ENCODE measurements at regions of chr3 and their contacts with region 1.

Region 1: GRCh38 chr3:27279123-27279522 is 90.1 kb downstream of the NEK10 start:
- DNase-seq: no peak
- ATAC-seq: peak in 1 of 8 donors; percentile 58
- H3K4me3 ChIP-seq: no peak overlapping the region
- H3K27ac ChIP-seq: no peak overlapping the region
- H3K4me1 ChIP-seq: peaks cover 0 to 10% (median 0%) of the 10 kb centered on the region in 9 donors
- H3K27me3 ChIP-seq: no peaks in the 10 kb centered on the region
- CTCF ChIP-seq: peak in 8 of 9 donors; percentile 6 to 64 (median 48)

Region 2: DNA sequence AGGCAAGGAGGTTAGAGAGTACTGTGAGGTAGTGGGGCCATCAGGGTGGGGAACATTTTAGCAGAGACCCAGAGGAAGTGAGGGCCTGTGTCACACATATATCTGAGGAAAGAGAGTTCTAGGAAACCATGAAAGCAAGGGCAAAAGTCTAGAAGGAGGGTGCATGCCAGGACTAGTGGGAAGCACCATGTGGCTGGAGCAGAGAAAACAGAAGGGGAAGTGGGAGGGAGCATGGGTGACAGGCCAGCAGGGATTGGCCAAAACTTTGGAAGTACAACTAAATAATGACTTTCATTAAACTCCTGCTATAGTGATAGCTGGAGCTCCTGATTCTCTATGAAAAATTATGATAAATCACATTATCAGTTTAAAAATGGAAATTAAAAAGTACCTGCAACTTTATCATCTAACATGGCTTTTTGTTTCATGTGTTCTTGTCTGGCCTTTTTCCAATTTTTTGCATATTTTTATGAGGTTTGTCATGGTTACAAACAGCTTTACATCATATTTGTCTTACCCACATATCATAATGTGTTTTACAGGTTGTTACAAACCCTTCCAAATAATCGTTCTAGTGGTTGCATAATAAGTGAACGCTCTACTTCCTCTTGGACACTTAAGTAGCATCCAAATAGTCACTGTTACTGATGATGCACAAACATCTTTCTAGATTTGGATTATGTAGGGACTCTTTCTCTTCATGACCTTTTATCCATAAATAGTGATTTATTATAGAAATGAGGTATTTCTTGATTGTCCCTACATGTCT is 78.2 kb before region 1 on chr3:
- intact Hi-C with region 1: no loop called
- DNase-seq: no peak
- ATAC-seq: no peak
- H3K4me3 ChIP-seq: no peak overlapping the region
- H3K27ac ChIP-seq: no peak overlapping the region
- H3K4me1 ChIP-seq: no peaks in the 10 kb centered on the region
- H3K27me3 ChIP-seq: no peaks in the 10 kb centered on the region
- CTCF ChIP-seq: no peak

Region 3: DNA sequence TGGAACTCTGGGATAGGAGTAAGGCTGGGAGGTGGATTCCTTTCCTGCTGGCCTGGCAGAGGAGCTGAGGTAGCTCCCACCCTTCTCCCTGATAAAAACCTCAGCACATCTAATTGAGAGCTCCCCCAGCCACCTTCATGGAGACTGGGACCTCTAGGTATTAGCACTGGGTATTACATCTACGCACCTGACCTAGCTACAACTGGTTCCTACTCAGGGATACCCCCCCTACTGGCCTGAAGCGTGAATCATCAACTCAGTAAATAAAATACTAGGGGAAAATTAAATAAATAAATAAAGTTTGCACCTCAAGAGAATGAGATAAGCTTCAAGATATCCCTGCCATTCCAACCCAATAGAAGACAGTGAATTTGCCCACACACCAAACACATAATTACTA is 50.3 kb before region 1 on chr3:
- intact Hi-C with region 1: loop called in 1 of 10 experiments (anchors 1 kb)
- DNase-seq: no peak
- ATAC-seq: no peak
- H3K4me3 ChIP-seq: no peak overlapping the region
- H3K27ac ChIP-seq: no peak overlapping the region
- H3K4me1 ChIP-seq: peaks cover 0 to 9% (median 0%) of the 10 kb centered on the region in 9 donors
- H3K27me3 ChIP-seq: no peaks in the 10 kb centered on the region
- CTCF ChIP-seq: no peak

Region 4: DNA sequence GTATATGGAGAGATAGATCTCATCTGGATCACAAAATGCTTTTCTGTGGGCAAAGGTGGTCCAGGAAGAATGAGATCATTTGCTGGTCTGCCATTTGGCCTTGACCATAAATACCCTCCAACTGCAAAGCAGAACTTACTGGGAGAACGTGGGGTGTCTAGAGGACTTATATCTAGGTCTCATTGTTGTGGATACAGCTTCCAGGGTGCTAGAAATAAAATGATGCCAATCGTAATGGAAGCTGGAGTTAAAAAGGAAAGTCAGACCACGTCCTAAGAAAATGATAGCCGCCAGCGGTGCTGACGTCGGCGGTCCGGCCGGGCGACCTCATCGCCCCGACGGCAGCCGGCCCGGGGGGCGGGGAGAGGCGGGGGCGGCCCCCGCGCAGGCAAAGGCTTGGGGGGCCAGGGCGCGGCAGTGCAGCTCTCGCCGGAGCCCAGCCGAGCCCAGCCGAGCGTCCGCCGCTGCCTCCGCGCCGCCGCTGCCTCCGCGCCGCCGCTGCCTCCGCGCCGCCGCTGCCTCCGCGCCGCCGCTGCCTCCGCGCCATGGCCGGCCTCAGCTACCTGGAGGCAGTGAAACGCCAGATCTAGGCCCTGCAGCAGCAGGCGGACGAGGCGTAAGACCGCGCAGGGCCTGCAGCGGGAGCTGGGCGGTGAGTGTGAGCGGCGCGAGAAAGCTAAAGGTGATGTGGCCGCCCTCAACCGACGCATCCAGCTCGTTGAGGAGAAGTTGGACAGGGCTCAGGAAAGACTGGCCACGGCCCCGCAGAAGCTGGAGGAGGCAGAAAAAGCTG is 353.5 kb after region 1 on chr3:
- intact Hi-C with region 1: no loop called
- DNase-seq: peak; percentile 28 to 57
- ATAC-seq: peak; percentile 64 to 93 (median 85)
- H3K4me3 ChIP-seq: peak overlapping the region; percentile 24 to 77 (median 61)
- H3K27ac ChIP-seq: peak overlapping the region; percentile 31 to 91 (median 78)
- H3K4me1 ChIP-seq: peaks cover 0 to 22% (median 0%) of the 10 kb centered on the region in 9 donors
- H3K27me3 ChIP-seq: peaks cover 0 to 3% (median 0%) of the 10 kb centered on the region in 7 donors
- CTCF ChIP-seq: no peak

Measured in heart right ventricle (tissue), 16 donors.